WTC11 (cell line): ENCODE measurements at regions of chr5 and their contacts with region 1.

Region 1: DNA sequence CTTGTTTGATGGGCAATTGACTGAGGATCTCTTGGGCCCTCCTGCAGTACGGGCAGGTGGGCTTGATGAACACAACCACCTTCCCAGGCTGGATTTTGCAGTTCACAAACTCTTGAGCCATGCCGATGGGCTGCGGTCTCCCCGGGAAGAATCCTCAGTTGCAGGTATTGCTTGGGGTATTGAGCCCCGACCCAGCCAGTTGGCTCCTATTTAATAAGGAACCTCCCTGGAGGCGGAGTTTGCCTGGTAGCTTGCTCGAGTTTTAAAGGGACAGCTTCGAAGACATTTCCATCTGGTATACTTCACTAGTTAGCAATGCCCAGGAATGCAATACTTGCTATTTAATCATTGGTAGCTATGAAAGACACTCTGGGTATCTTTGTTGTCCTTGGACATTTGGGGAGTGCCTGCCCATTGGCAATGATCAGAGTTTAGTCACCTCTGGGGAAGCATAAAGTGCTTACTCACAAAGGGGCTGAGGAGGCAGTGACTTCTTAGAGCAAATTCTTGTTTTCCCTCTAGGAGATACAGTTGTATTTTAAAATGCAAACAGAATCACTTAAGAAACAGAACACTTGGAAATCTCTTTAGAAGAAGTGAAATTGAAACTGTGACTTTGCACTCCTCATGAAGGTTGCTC is at the start of gene GLRX:
- DNase-seq: peak; percentile 56
- ATAC-seq: peak; percentile 86
- H3K4me3 Mint-ChIP-seq: peak within 1 kb of the TSS; percentile 88
- H3K27ac Mint-ChIP-seq: peak within 1 kb of the TSS; percentile 90
- H3K4me1 Mint-ChIP-seq: peaks cover 50% of the 10 kb centered on the region
- H3K27me3 Mint-ChIP-seq: no peaks in the 10 kb centered on the region; the same call in 1 of the 2 replicates
- CTCF ChIP-seq: no peak
- total RNA-seq, gene GLRX: 15.9 to 21.0 TPM (median 19.2 TPM) in 3 replicates

Region 2: GRCh38 chr5:95638632-95639031 is 184.0 kb before region 1 on chr5:
- CTCF ChIA-PET with region 1: no interaction called
- POLR2A ChIA-PET with region 1: no interaction called
- DNase-seq: no peak
- ATAC-seq: no peak
- H3K4me3 Mint-ChIP-seq: no peak overlapping the region
- H3K27ac Mint-ChIP-seq: no peak overlapping the region
- H3K4me1 Mint-ChIP-seq: no peaks in the 10 kb centered on the region
- H3K27me3 Mint-ChIP-seq: no peaks in the 10 kb centered on the region
- CTCF ChIP-seq: no peak

Region 3: DNA sequence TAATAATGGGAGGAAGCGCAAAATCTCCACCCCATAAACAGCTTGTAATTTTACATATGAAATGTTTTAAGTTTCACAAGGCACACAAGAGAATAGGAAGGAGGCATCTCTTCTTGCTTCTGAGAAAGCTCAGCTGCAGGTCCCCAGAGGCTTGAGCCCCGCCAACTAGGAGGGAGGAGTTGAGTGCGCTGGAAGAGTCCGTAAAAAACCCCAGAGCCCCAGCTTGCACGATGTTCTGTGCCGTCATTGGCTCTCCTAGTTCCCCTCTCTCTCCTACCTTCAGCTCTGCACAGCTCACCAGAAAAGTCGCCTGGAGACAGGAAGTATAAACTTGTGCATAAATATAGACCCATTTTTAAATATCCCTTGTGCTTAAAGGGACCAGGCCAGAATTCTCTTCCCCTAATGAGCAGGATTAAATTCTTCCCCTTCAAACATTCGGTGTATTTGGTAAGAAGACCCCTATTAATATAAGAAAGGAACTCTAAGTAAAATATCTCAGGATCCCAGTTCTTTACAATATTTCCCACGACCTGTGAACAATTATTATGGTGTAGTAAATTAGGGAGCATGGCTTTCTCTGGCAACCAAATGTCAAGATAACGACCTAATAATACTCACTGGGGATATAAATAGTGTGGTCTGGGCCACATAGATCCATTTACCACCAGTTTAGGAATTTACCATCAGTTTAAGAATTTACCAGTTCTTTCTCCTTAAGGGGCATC is 13.8 kb before region 1 on chr5:
- CTCF ChIA-PET with region 1: interaction called, 3 read pairs
- POLR2A ChIA-PET with region 1: interaction called, 11 read pairs
- DNase-seq: no peak
- ATAC-seq: peak; percentile 58
- H3K4me3 Mint-ChIP-seq: no peak overlapping the region
- H3K27ac Mint-ChIP-seq: no peak overlapping the region
- H3K4me1 Mint-ChIP-seq: peaks cover 46% of the 10 kb centered on the region
- H3K27me3 Mint-ChIP-seq: no peaks in the 10 kb centered on the region
- CTCF ChIP-seq: no peak

Region 4: DNA sequence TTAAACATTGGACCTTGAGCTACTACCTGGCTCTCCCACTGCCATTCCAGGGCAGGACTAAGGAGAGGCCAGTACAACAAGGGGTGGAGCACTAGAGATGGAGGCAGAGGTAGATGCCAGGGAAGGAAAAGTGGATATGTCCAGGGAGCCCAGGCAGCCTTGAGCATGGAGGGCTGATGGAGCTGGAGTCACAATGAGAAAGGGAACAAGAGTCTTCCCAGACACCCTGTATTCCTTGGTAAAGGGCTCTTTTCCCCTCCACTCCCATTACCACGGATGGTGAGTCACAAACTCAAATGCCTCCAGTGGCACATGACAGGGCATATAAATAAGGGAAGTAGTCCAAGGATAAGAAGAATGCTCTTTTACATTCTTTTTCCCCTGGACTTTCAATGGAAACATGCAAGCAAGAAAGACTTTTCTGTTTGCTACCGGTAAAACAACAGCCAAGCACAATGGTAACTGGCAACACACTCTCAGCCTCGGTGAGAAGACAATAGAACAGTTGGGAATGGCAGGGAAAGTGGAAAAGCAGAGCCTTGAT is 968.4 kb after region 1 on chr5:
- CTCF ChIA-PET with region 1: no interaction called
- POLR2A ChIA-PET with region 1: no interaction called
- DNase-seq: no peak
- ATAC-seq: peak; percentile 41
- H3K4me3 Mint-ChIP-seq: no peak overlapping the region
- H3K27ac Mint-ChIP-seq: no peak overlapping the region
- H3K4me1 Mint-ChIP-seq: peaks cover 10% of the 10 kb centered on the region
- H3K27me3 Mint-ChIP-seq: no peaks in the 10 kb centered on the region
- CTCF ChIP-seq: no peak